ENCODE measurements at regions of chr2 and their contacts with region 1.

Region 1: GRCh38 chr2:201451292-201452057 is at the starts of genes STRADB and TRAK2:
- DNase-seq: peak; percentile 89
- ATAC-seq: peak; percentile 93
- H3K4me3 Mint-ChIP-seq: peak within 1 kb of the TSS; percentile 97
- H3K27ac Mint-ChIP-seq: peak within 1 kb of the TSS; percentile 95
- H3K4me1 Mint-ChIP-seq: peaks cover 51% of the 10 kb centered on the region
- H3K27me3 Mint-ChIP-seq: no peaks in the 10 kb centered on the region
- CTCF ChIP-seq: no peak
- total RNA-seq, gene STRADB: 17.8 and 23.3 TPM in 2 replicates
- total RNA-seq, gene TRAK2: 17.7 and 20.1 TPM in 2 replicates

Region 2: DNA sequence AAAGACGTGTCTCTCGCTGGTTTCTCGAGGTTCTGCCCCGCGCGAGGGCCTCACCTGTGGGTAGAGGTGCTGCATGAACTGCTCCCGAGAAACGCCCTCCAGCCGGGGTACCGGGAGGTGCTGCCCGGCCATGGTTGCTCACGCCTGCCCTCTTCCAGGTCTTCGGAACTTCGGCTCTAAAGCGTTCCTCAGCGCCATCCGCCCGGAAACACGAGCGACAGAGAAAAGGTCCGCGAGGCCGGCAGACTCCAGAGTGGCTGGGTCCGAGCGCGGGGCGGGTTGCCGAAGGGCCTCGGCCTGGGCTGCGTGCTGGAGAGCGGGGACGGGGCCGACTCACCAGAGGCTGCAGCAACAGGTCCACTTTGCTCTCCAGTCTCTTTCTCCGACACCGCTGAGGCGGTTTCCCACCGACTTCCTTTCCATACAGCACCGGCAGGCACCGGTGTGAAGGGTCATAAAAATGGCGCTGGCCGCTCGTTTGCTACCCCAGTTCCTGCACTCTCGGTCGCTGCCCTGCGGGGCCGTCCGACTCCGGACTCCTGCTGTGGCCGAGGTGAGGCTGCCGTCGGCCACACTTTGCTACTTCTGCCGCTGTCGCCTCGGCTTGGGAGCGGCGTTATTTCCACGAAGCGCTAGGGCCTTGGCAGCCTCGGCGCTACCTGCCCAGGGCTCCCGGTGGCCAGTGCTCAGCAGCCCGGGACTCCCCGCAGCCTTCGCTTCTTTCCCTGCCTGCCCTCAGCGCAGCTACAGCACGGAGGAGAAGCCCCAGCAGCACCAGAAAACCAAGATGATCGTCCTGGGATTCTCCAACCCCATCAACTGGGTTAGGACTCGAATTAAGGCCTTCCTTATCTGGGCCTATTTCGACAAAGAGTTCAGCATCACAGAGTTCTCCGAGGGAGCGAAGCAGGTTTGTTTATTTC is 1495.9 kb before region 1 on chr2 and contains the starts of genes MAIP1 and TYW5:
- CTCF ChIA-PET with region 1: no interaction called
- POLR2A ChIA-PET with region 1: no interaction called
- intact Hi-C with region 1: loop called (anchors 1 kb)
- DNase-seq: peak; percentile 75
- ATAC-seq: peak; percentile 87
- H3K4me3 Mint-ChIP-seq: peak within 1 kb of the TSS; percentile 99
- H3K27ac Mint-ChIP-seq: peak within 1 kb of the TSS; percentile 91
- H3K4me1 Mint-ChIP-seq: peaks cover 48% of the 10 kb centered on the region
- H3K27me3 Mint-ChIP-seq: no peaks in the 10 kb centered on the region
- CTCF ChIP-seq: no peak
- total RNA-seq, gene MAIP1: 20.2 and 20.7 TPM in 2 replicates
- total RNA-seq, gene TYW5: 10.5 and 12.5 TPM in 2 replicates

Region 3: GRCh38 chr2:200042944-200043343 is 1408.5 kb before region 1 on chr2:
- CTCF ChIA-PET with region 1: no interaction called
- POLR2A ChIA-PET with region 1: no interaction called
- intact Hi-C with region 1: no loop called
- DNase-seq: no peak
- ATAC-seq: no peak
- H3K4me3 Mint-ChIP-seq: no peak overlapping the region
- H3K27ac Mint-ChIP-seq: no peak overlapping the region
- H3K4me1 Mint-ChIP-seq: no peaks in the 10 kb centered on the region
- H3K27me3 Mint-ChIP-seq: peaks cover 2% of the 10 kb centered on the region
- CTCF ChIP-seq: no peak

Region 4: DNA sequence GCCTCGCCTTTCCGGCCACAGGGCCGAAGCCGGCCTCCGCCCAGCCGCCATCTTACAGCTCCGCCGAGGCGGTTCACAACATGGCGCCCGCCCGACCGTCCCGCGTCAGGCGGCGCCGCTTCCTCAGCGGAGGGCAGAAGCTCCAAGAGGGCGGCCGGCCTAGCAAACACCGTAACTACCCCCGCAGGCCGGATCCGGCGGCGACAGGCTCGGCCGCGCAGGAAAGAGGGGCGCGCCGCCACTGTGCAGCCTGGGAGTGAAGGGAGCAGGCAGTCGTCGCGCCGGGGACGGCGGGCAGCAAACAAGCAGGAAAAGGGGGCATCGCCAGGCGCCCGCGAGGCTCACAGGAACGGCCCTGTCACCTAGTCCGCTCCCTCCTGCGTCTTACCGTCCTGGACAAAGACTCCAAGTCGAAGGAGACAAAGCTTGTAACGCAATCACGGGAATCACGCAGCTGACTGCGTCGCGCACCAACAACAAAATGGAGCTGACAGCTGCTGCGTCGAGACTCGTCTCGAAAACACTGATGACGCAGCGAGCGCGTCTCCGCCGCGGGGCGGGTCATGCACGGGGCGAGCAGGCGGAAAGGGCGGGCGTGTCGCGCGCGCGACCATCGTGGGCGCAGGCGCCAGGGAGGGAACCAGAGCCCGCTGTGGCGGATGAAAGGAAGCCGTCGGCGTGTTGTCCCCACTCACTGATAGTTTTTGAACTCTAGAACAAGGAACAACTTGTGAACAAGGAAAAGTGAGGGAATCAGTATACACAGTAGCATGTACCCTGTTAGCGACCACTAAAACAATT is 587.1 kb before region 1 on chr2 and contains the start of gene CLK1:
- CTCF ChIA-PET with region 1: no interaction called
- POLR2A ChIA-PET with region 1: interaction called, 13 read pairs
- intact Hi-C with region 1: loop called (anchors 5 kb)
- DNase-seq: peak; percentile 90
- ATAC-seq: peak; percentile 82
- H3K4me3 Mint-ChIP-seq: peak within 1 kb of the TSS; percentile 100
- H3K27ac Mint-ChIP-seq: peak within 1 kb of the TSS; percentile 100
- H3K4me1 Mint-ChIP-seq: peaks cover 41% of the 10 kb centered on the region
- H3K27me3 Mint-ChIP-seq: no peaks in the 10 kb centered on the region
- CTCF ChIP-seq: no peak
- total RNA-seq, gene CLK1: 173 and 203 TPM in 2 replicates

Region 5: DNA sequence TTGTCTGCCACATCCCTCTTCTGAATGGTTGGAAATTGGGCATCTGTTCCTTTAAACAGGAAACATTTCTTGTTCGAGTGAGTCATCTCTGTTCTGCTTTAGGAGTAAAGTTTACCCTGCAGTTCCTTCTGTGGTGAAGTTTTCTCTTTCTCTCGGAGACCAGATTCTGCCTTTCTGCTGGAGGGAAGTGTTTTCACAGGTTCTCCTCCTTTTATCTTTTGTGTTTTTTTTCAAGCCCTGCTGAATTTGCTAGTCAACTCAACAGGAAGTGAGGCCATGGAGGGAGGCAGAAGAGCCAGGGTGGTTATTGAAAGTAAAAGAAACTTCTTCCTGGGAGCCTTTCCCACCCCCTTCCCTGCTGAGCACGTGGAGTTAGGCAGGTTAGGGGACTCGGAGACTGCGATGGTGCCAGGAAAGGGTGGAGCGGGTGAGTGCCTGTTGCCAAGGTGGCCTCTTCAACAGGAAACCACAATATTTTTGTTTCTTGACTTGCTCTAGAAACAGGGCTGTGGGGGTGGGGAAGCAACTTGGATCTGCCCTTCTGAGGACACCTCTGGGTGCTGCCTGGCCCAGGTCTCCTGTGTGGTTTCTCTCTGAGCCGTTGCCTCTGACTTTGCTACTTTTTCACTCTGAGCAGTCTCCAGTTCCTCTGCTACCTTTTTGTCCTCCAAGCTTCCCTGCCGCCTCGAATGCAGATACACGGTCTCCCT is 193.4 kb before region 1 on chr2:
- CTCF ChIA-PET with region 1: interaction called, 3 read pairs
- POLR2A ChIA-PET with region 1: interaction called, 6 read pairs
- intact Hi-C with region 1: loop called (anchors 1 kb)
- DNase-seq: peak; percentile 68
- ATAC-seq: peak; percentile 61
- H3K4me3 Mint-ChIP-seq: peak overlapping the region; percentile 90
- H3K27ac Mint-ChIP-seq: peak overlapping the region; percentile 98
- H3K4me1 Mint-ChIP-seq: peaks cover 83% of the 10 kb centered on the region
- H3K27me3 Mint-ChIP-seq: no peaks in the 10 kb centered on the region
- CTCF ChIP-seq: no peak

Region 6: GRCh38 chr2:201572846-201573508 is 121.5 kb after region 1 on chr2:
- CTCF ChIA-PET with region 1: no interaction called
- POLR2A ChIA-PET with region 1: no interaction called
- intact Hi-C with region 1: loop called (anchors 2 kb)
- DNase-seq: no peak
- ATAC-seq: peak; percentile 71
- H3K4me3 Mint-ChIP-seq: peak overlapping the region; percentile 52
- H3K27ac Mint-ChIP-seq: peak overlapping the region; percentile 78
- H3K4me1 Mint-ChIP-seq: peaks cover 39% of the 10 kb centered on the region
- H3K27me3 Mint-ChIP-seq: peaks cover 2% of the 10 kb centered on the region
- CTCF ChIP-seq: no peak

Region 7: GRCh38 chr2:202033321-202034248 is 582.1 kb after region 1 on chr2 and contains the start of gene FZD7:
- CTCF ChIA-PET with region 1: no interaction called
- POLR2A ChIA-PET with region 1: no interaction called
- intact Hi-C with region 1: loop called (anchors 1 kb)
- DNase-seq: peak; percentile 79
- ATAC-seq: peak; percentile 87
- H3K4me3 Mint-ChIP-seq: peak within 1 kb of the TSS; percentile 86
- H3K27ac Mint-ChIP-seq: peak within 1 kb of the TSS; percentile 14
- H3K4me1 Mint-ChIP-seq: peaks cover 12% of the 10 kb centered on the region
- H3K27me3 Mint-ChIP-seq: peaks cover 17% of the 10 kb centered on the region
- CTCF ChIP-seq: no peak
- total RNA-seq, gene FZD7: 0.33 and 0.37 TPM in 2 replicates